ENCODE measurements at regions of chr1 and their contacts with region 1.

Region 1: GRCh38 chr1:44377925-44378784 is 23.1 kb upstream of the ERI3 start:
- DNase-seq: no peak
- ATAC-seq: peak; percentile 51

Region 2: GRCh38 chr1:44489481-44489880 is 111.3 kb after region 1 on chr1:
- intact Hi-C with region 1: no loop called
- DNase-seq: no peak
- ATAC-seq: no peak

Region 3: DNA sequence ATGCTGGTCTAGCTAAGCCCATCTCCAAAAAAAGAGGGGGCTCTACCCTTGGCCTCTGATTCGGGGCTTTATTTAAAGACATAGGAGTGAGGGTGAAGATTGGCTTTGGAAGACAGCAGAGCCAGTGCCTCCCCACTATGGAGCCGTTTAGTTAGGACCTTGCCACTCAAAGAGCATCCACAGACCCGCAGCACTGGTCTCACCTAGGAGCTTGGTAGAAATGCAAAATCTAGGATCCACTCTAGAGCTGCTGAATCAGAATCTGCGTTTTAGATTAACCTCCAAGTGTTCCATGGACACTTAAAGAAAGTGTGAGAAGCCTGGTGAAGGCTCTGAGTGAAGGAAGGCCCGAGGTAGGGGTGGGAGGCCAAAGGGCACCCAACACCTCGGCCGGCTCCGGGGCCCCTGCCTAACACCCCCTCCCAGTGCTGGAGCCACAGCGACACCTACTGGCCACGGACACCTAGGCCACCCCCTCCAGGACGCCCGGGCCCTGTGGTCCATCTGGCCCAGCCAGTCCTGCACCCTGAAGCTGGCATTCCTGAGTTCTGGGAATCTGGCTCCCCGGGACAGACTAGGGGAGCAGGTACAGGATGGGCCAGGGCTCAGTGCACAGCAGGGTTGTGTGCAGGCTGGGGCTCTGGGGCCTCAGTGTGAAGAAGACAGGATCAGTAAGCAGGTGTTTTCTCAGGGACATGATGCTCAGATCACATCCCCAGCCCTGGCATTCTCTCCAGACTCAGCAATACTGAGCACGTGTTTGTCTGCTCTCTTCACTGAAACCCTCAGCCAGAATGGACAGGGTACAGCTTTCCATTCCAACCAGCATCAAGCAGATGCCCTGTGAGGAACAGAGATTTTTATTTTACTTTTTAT is 217.0 kb after region 1 on chr1:
- intact Hi-C with region 1: loop called (anchors 2 kb)
- DNase-seq: peak; percentile 90
- ATAC-seq: peak; percentile 97